ENCODE measurements at regions of chr22 and their contacts with region 1.

Region 1: GRCh38 chr22:46367707-46368191 is 32.2 kb downstream of the TRMU start:
- DNase-seq: peak; percentile 64 to 72 (median 70)
- ATAC-seq: peak; percentile 94
- H3K4me3 ChIP-seq: no peak overlapping the region
- H3K27ac ChIP-seq: no peak overlapping the region
- H3K4me1 ChIP-seq: peaks cover 0 to 32% of the 10 kb centered on the region in 2 experiments; a peak in 2 of 5 replicates
- H3K27me3 ChIP-seq: peaks cover 0 to 41% of the 10 kb centered on the region in 2 experiments; a peak in 4 of 5 replicates
- CTCF ChIP-seq: peak; percentile 78 to 85 (median 81)
- EP300 ChIP-seq: no peak
- POLR2A ChIP-seq: no peak
- RAD21 ChIP-seq: peak; percentile 46 to 78

Region 2: GRCh38 chr22:45842291-45842991 is 525.3 kb before region 1 on chr22:
- CTCF ChIA-PET with region 1: no interaction called
- POLR2A ChIA-PET with region 1: no interaction called
- in situ Hi-C with region 1: no loop called
- intact Hi-C with region 1: no loop called
- DNase-seq: no peak
- ATAC-seq: no peak
- H3K4me3 ChIP-seq: no peak overlapping the region
- H3K27ac ChIP-seq: no peak overlapping the region
- H3K4me1 ChIP-seq: no peaks in the 10 kb centered on the region
- H3K27me3 ChIP-seq: no peaks in the 10 kb centered on the region
- CTCF ChIP-seq: no peak
- EP300 ChIP-seq: no peak
- POLR2A ChIP-seq: no peak
- RAD21 ChIP-seq: no peak

Region 3: DNA sequence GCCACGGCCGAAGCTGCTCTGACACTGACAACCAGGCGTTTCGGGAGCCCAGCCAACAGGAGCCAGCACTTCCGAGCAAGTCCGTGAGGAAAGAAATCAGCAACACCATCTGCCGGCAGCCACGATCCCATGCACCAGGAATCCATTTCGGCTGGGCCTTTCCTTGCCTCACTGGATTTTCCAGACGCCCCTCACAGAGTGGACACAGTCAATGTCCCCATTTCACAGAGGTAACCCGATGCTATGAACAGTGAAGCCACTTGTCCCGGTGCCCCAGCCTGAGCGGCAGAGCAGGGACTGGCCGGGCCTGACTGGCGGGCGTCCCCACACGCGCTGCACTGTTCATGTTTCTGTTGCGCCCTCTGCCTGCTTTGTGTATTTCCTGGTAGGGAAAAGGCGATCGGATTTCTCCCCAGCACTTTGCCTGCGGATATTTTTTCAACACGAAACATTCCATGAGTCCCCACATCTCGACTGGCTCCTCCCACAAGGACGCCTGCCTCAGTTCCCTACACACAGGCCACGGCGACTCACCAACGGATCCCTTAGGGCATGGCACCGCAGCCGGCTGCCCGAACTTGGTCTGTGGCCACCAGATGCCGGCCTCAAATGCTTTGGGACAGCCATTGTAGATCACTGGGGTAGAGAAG is 23.0 kb after region 1 on chr22:
- CTCF ChIA-PET with region 1: interaction called, 10 read pairs
- POLR2A ChIA-PET with region 1: interaction called, 3 read pairs
- in situ Hi-C with region 1: no loop called
- intact Hi-C with region 1: no loop called
- DNase-seq: peak; percentile 37 to 58 (median 48)
- ATAC-seq: peak; percentile 86
- H3K4me3 ChIP-seq: peak overlapping the region; percentile 19; the same call in 1 of the 2 replicates
- H3K27ac ChIP-seq: no peak overlapping the region
- H3K4me1 ChIP-seq: peaks cover 0 to 26% of the 10 kb centered on the region in 2 experiments; a peak in 2 of 5 replicates
- H3K27me3 ChIP-seq: peaks cover 6 to 73% of the 10 kb centered on the region in 2 experiments; a peak in 4 of 5 replicates
- CTCF ChIP-seq: peak; percentile 40 to 60 (median 43); a peak in 5 of 6 replicates
- EP300 ChIP-seq: no peak
- POLR2A ChIP-seq: no peak
- RAD21 ChIP-seq: peak; percentile 26 to 64; a peak in 3 of 4 replicates

Region 4: DNA sequence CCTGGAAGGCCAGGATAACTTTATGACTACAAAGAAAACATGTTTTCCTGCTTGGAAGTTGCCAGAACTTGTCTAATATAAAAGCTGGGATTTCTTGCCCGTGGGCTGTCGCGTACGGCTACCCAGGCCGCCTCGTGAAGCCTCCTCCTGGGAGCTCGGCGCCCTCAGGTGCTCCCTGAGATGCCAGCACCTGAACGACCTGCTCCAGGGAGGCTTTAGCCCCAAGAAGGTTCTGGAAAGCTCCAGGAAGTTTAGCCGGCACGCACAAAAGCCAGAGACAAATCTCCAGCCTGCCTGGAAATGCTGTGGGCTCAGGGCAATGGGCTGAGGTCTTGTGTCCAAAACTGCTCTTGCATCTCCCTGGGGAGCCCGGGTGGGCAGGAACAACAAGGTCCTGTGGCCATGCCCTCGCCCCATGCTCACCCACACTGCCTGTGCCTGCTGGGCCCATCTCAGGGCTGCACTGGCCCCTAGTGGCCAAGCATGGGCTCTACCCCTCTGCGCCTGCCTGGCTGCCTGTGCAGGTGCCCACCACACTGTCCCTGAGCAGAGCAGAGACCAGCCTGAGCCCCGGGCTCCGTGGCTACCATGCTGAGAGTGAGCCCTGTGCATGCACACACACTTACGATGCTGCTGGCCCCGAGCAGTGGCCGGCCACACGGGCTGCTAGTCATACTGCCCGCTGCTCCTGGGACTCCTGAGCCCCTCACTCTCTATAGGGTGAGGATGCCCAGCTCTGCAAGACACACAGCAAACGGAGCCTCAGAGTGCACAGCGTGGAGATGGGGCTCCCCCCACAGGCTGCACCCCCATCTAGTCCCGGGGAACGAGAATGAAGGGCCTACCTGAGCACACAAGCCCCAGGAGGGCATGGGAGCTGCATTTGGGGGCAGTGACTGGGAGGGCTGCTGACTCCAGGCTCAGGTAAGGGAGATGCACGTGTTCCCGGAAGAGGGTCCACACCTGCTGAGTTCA is 174.5 kb after region 1 on chr22:
- CTCF ChIA-PET with region 1: interaction called, 4 read pairs
- POLR2A ChIA-PET with region 1: no interaction called
- in situ Hi-C with region 1: loop called (anchors 5 kb)
- intact Hi-C with region 1: loop called (anchors 1 kb)
- DNase-seq: peak; percentile 52 to 77 (median 73)
- ATAC-seq: peak; percentile 99
- H3K4me3 ChIP-seq: no peak overlapping the region
- H3K27ac ChIP-seq: no peak overlapping the region
- H3K4me1 ChIP-seq: peaks cover 0 to 14% of the 10 kb centered on the region in 2 experiments; a peak in 2 of 5 replicates
- H3K27me3 ChIP-seq: peaks cover 6 to 35% of the 10 kb centered on the region in 2 experiments; a peak in 3 of 5 replicates
- CTCF ChIP-seq: peak; percentile 80 to 83 (median 82)
- EP300 ChIP-seq: no peak
- POLR2A ChIP-seq: no peak
- RAD21 ChIP-seq: peak; percentile 48 to 83